SK-N-SH (cell line): ENCODE measurements at regions of chr3 and their contacts with region 1.

Region 1: DNA sequence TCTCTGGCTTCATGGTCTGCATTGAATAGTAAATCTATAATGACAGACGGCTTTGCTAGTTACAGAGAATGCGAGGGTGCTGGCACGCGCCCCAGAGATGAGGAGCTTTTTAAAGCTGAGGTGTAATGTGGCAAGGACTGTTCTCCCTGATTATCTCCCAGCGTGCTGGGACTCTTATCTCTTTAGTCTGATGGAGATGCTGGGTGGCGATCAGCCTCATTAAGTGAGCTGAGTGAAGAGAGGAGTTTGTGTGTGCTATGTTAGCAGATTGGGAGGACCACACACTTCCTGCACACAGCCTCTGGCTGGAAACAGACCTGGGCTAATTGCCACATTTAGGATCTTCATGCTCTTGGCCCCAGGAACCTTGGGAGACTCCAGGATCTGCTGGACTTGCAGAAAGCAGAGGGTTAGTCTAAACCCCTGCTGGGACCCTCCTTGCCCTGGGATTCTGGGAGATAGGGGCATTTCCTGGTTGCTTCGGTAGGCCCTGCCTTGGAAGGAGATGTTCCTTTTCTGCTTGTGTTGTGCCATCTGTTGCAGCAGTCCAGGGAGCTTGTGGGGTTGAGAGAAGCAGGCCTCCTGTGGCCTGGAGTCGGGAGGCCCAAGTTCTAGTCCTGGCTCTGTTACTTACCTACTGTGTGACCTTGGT is 15.0 kb downstream of the PDIA5 start:
- DNase-seq: peak; percentile 66
- H3K4me3 ChIP-seq: no peak overlapping the region
- H3K27ac ChIP-seq: peak overlapping the region in 1 of 2 experiments; percentile 96; a peak in 2 of 4 replicates
- H3K4me1 ChIP-seq: peaks cover 55 to 72% of the 10 kb centered on the region in 2 experiments
- H3K27me3 ChIP-seq: no peaks in the 10 kb centered on the region
- CTCF ChIP-seq: no peak
- EP300 ChIP-seq: peak in 1 of 2 experiments; percentile 69; a peak in 1 of 4 replicates
- RAD21 ChIP-seq: no peak

Region 2: GRCh38 chr3:122810734-122811133 is 271.1 kb before region 1 on chr3:
- CTCF ChIA-PET with region 1: no interaction called
- POLR2A ChIA-PET with region 1: no interaction called
- DNase-seq: no peak
- H3K4me3 ChIP-seq: no peak overlapping the region
- H3K27ac ChIP-seq: no peak overlapping the region
- H3K4me1 ChIP-seq: no peaks in the 10 kb centered on the region; a peak in 2 of 4 replicates
- H3K27me3 ChIP-seq: no peaks in the 10 kb centered on the region
- CTCF ChIP-seq: no peak
- EP300 ChIP-seq: no peak
- RAD21 ChIP-seq: no peak

Region 3: DNA sequence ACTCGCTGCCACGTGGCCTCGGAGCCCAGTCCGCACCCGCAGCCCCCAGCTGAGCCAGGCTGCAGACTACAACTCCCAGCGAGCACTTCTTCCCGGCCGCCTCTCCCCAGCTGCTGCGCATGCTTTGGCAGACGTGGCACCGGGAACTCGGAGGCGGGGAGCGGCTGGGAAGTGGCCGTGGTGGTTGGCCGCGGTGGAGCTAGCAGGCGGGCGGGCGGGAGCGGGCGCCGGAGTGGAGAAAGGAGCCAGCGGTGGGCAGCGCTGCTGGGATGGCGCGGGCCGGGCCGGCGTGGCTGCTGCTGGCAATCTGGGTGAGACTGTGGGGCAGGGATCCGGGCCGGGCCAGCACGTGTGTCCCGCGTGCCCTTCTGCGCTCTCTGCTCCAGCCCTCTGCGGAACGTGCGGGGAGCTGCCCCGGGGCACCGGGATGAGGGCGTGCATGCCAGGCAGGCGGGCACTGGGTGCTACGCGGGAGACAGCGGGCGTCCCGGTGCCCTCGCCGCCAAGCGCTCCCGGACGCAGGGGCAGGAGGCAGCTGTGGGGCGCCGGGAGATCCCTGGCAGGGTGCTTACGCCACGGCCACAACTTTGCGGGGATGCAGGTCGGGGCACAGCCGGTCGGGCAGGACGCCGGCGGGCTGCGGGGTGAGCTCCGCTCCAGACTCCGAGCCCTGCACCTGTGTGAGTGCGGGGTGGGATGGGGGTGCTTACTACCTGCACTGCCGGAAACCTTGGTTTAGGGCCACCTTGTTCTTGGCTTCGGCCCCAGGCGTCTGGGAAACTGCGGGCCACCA is 14.8 kb before region 1 on chr3 and contains the start of gene PDIA5:
- CTCF ChIA-PET with region 1: interaction called, 13 read pairs
- POLR2A ChIA-PET with region 1: interaction called, 9 read pairs
- DNase-seq: peak; percentile 96
- H3K4me3 ChIP-seq: peak within 1 kb of the TSS; percentile 94 to 96
- H3K27ac ChIP-seq: peak within 1 kb of the TSS; percentile 49 to 80; a peak in 3 of 4 replicates
- H3K4me1 ChIP-seq: peaks cover 3 to 33% of the 10 kb centered on the region in 2 experiments; a peak in 3 of 4 replicates
- H3K27me3 ChIP-seq: no peaks in the 10 kb centered on the region
- CTCF ChIP-seq: no peak
- EP300 ChIP-seq: no peak
- RAD21 ChIP-seq: no peak
- polyA plus RNA-seq, gene PDIA5: 28.0 and 28.6 TPM in 2 replicates